Naive thymus-derived CD4-positive, alpha-beta T cell (primary cell): ENCODE measurements at regions of chr7 and their contacts with region 1.

Region 1: DNA sequence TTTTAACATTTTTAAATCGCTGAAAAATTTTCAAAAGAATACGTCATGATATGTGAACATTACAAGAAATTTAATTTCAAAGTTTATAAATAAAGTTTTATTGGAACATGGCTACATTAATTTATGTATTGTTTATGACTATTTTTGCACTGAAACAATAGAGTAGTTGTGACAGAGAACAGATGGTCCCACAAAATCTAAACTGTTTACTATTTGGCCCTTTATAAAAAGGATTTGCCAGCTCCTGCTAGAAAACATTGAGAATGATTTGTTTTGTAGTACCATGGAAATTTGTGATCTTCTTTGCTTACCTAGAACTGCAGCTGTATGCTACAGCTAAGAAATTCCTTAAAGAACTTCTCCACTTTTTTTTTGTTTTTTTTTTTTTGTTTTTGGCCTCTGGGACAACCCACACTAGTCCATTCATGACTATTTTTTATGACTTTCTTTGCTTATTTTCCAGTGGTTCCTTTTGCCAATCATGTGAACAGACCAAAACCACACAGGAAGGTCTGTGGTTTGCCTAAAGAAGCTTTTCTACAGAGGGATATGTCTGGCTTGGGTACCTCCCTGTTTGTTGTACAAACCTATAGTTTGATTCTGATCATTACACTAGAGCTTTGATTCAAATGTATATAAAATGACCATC is 55.7 kb downstream of the ST7 start:
- DNase-seq: peak in 8 of 9 donors; percentile 40 to 66 (median 58)
- ATAC-seq: peak; percentile 74
- H3K4me3 ChIP-seq: no peak overlapping the region
- H3K4me3 Mint-ChIP-seq: peak overlapping the region; percentile 39 to 81 (median 71)
- H3K27ac ChIP-seq: no peak overlapping the region
- H3K27ac Mint-ChIP-seq: peak overlapping the region in 5 of 9 donors; percentile 46 to 74 (median 63)
- H3K4me1 ChIP-seq: peaks cover 19 to 54% of the 10 kb centered on the region in 2 donors
- H3K4me1 Mint-ChIP-seq: peaks cover 44 to 77% (median 66%) of the 10 kb centered on the region in 7 donors
- H3K27me3 ChIP-seq: no peaks in the 10 kb centered on the region
- H3K27me3 Mint-ChIP-seq: peaks cover 0 to 57% (median 0%) of the 10 kb centered on the region in 5 donors

Region 2: GRCh38 chr7:116862234-116862950 is 146.6 kb before region 1 on chr7 and contains the start of gene CAPZA2:
- CTCF ChIA-PET with region 1: no interaction called
- POLR2A ChIA-PET with region 1: no interaction called
- intact Hi-C with region 1: loop called in 1 of 2 experiments (anchors 5 kb)
- DNase-seq: peak; percentile 89 to 99 (median 96)
- ATAC-seq: peak; percentile 96
- H3K4me3 ChIP-seq: peak within 1 kb of the TSS; percentile 73
- H3K4me3 Mint-ChIP-seq: peak within 1 kb of the TSS; percentile 94 to 99 (median 97)
- H3K27ac ChIP-seq: peak within 1 kb of the TSS; percentile 91
- H3K27ac Mint-ChIP-seq: peak within 1 kb of the TSS; percentile 91 to 99 (median 96)
- H3K4me1 ChIP-seq: peaks cover 11 to 28% of the 10 kb centered on the region in 2 donors
- H3K4me1 Mint-ChIP-seq: peaks cover 29 to 49% (median 46%) of the 10 kb centered on the region in 7 donors
- H3K27me3 ChIP-seq: no peaks in the 10 kb centered on the region
- H3K27me3 Mint-ChIP-seq: peaks cover 4 to 26% (median 8%) of the 10 kb centered on the region in 5 donors
- total RNA-seq, gene CAPZA2: 86.2 to 129 (median 111) TPM

Region 3: GRCh38 chr7:116953727-116954442 is 55.1 kb before region 1 on chr7:
- CTCF ChIA-PET with region 1: interaction called, 5 read pairs
- POLR2A ChIA-PET with region 1: interaction called, 3 read pairs
- intact Hi-C with region 1: loop called in 1 of 2 experiments (anchors 1 kb)
- DNase-seq: peak in 4 of 9 donors; percentile 7 to 64 (median 36)
- ATAC-seq: peak; percentile 87
- H3K4me3 ChIP-seq: peak overlapping the region; percentile 79
- H3K4me3 Mint-ChIP-seq: peak overlapping the region; percentile 86 to 96 (median 94)
- H3K27ac ChIP-seq: peak overlapping the region; percentile 64
- H3K27ac Mint-ChIP-seq: peak overlapping the region; percentile 66 to 95 (median 88)
- H3K4me1 ChIP-seq: peaks cover 7 to 8% of the 10 kb centered on the region in 2 donors
- H3K4me1 Mint-ChIP-seq: peaks cover 13 to 25% (median 22%) of the 10 kb centered on the region in 7 donors
- H3K27me3 ChIP-seq: no peaks in the 10 kb centered on the region
- H3K27me3 Mint-ChIP-seq: peaks cover 0 to 24% (median 0%) of the 10 kb centered on the region in 5 donors

Region 4: DNA sequence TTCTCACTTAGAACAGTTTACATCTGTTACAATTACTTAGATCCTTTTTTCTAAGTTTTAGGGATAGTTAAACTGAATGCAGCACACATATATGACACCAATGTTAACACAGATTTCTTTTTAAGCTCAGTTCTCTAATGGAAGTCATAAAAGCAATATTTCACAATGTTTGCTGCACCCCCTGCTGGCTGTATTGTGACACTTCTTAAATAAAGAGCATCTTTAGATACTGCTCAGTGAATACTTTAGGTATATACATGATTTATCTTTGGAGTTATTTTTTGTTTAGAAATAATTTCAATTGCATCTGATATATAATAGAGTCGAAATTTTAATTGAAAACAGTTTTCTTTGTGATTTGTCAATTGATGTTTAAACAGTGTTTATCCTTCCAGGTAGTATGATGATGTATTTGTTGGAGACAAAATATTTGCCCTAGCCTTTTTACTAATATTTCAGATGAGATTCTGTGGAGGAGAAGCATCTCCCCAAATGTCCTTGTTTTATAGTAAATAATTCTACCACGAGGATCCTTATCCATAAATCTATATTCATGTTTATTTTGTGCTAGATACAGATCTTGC is 118.7 kb after region 1 on chr7:
- CTCF ChIA-PET with region 1: interaction called, 10 read pairs
- POLR2A ChIA-PET with region 1: no interaction called
- intact Hi-C with region 1: no loop called
- DNase-seq: peak in 8 of 9 donors; percentile 9 to 53 (median 44)
- ATAC-seq: peak; percentile 76
- H3K4me3 ChIP-seq: no peak overlapping the region
- H3K4me3 Mint-ChIP-seq: no peak overlapping the region
- H3K27ac ChIP-seq: no peak overlapping the region
- H3K27ac Mint-ChIP-seq: no peak overlapping the region
- H3K4me1 ChIP-seq: no peaks in the 10 kb centered on the region
- H3K4me1 Mint-ChIP-seq: no peaks in the 10 kb centered on the region
- H3K27me3 ChIP-seq: no peaks in the 10 kb centered on the region
- H3K27me3 Mint-ChIP-seq: peaks cover 0 to 11% (median 0%) of the 10 kb centered on the region in 5 donors